ENCODE measurements at regions of chr1 and their contacts with region 1.

Region 1: DNA sequence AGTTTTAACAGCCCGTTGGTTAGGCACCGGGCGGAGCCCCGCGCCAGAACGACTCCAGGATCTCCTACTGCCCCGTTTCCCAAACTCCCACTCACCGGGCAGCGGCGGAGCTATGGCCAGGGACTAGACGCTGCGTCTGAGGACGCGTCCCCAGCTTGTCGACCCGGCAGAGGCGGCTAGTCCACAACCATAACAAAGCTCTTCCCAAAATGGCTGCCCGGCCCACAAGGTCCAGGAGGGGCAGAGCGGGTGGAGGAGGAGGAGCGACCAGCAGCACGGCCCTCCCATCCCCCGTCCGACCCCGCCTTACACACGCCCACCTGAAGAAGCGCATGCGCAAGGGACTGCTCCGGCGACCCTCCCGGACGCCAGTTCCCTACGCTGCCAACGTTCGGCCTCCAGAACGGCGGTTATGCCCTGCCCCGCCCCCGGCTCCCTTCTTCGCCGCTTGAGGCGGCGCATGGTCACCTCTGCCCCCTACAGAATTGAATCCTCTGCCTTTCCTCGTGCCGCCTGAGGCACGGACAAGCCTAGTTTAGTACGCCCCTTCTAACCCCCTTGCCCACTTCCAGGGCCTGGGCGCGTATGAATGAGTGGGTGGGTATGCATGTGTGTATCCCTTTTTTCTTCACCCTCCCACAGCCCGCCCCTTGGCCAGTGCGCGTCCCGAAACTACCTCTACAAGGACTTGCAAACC is at the start of gene GPBP1L1:
- DNase-seq: peak; percentile 94 to 98 (median 97)
- ATAC-seq: peak; percentile 85
- H3K4me3 ChIP-seq: peak within 1 kb of the TSS; percentile 86
- H3K4me3 Mint-ChIP-seq: peak within 1 kb of the TSS; percentile 95 to 100 (median 99)
- H3K27ac ChIP-seq: peak within 1 kb of the TSS; percentile 94
- H3K27ac Mint-ChIP-seq: peak within 1 kb of the TSS; percentile 99 to 100 (median 100)
- H3K4me1 ChIP-seq: peaks cover 29 to 35% of the 10 kb centered on the region in 2 donors
- H3K4me1 Mint-ChIP-seq: peaks cover 21 to 66% (median 50%) of the 10 kb centered on the region in 7 donors
- H3K27me3 ChIP-seq: no peaks in the 10 kb centered on the region
- H3K27me3 Mint-ChIP-seq: no peaks in the 10 kb centered on the region
- total RNA-seq, gene GPBP1L1: 110 to 180 (median 122) TPM

Region 2: DNA sequence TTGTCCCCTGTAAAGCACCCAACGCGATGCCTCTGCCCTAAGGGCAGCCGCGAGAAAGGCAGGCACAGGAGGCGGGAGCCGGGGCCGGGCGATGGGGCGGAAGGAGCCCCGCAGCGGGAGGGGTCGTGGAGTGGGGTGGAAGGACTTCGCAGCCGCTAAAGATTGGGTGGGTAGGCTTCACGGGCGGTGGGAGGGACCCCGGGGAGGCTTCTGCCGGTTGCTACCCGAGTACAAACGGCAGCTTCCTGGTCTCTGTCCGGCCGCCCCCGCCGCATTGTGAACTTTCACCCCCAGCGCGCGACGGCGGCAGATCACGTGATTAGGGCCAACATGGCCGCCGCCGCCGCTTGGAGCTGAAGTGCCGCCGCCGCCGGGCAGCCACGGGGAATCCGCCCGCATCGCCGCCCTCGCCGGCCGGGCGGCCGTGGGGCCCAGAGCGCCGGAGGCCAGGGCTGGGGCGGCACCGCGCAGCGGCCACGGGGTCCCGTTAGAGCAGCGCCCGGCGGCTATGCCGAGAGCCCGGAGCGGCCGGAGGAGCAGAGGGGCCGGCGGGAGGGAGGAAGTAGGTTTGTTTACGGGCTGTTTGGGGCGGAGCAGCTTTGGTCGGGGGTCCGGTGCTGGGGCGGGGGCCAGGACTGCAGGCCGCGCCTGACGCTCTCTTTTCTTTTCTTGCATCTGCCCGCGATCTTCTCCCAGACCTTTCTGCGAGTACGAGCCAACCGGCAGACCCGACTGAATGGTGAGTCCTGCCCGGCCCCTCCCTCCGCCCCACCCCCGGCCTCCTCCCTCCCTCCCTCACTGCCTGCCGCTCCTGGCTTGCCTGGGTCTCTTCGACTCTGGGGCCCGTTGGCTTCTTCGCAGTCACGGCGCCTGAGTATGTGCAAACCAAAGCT is 1054.6 kb before region 1 on chr1:
- CTCF ChIA-PET with region 1: no interaction called
- POLR2A ChIA-PET with region 1: interaction called, 5 read pairs
- intact Hi-C with region 1: loop called in 1 of 2 experiments (anchors 2 kb)
- DNase-seq: peak; percentile 80 to 92 (median 87)
- ATAC-seq: peak; percentile 87
- H3K4me3 ChIP-seq: peak overlapping the region; percentile 70
- H3K4me3 Mint-ChIP-seq: peak overlapping the region; percentile 69 to 95 (median 90)
- H3K27ac ChIP-seq: peak overlapping the region; percentile 85
- H3K27ac Mint-ChIP-seq: peak overlapping the region; percentile 46 to 99 (median 97)
- H3K4me1 ChIP-seq: peaks cover 8 to 13% of the 10 kb centered on the region in 2 donors
- H3K4me1 Mint-ChIP-seq: peaks cover 26 to 50% (median 39%) of the 10 kb centered on the region in 7 donors
- H3K27me3 ChIP-seq: no peaks in the 10 kb centered on the region
- H3K27me3 Mint-ChIP-seq: no peaks in the 10 kb centered on the region

Region 3: DNA sequence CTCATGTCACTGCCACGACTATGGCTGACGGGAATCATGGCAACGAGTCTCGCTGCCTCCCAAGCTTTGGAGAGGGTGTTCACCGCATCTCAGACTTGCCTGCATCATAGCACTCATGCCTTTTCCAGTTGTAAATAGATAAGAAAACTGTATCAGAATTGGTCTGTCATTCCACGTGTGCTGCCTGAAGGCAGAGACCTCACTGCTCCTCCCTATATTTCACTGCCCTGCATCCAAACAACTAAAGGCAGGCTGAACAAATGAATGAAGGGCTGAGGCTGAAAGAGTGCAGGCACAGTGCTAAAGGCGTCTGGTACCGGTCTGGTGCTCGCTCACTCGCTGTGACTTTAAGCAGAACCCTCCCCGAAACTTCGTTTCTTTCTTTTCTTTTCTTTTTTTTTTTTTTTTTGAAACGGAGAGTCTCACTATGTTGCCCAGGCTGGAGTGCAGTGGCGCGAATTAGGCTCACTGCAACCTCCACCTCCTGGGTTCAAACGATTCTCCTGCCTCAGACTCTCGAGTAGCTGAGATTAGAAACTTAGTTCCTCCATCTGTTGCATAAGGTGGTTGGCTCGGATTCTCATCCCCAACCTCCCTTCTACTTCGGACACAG is 700.6 kb before region 1 on chr1:
- CTCF ChIA-PET with region 1: no interaction called
- POLR2A ChIA-PET with region 1: interaction called, 3 read pairs
- intact Hi-C with region 1: loop called (anchors 5 kb)
- DNase-seq: no peak
- ATAC-seq: no peak
- H3K4me3 ChIP-seq: peak overlapping the region; percentile 77
- H3K4me3 Mint-ChIP-seq: peak overlapping the region; percentile 90 to 100 (median 98)
- H3K27ac ChIP-seq: peak overlapping the region; percentile 68
- H3K27ac Mint-ChIP-seq: peak overlapping the region; percentile 75 to 99 (median 92)
- H3K4me1 ChIP-seq: peaks cover 8 to 13% of the 10 kb centered on the region in 2 donors
- H3K4me1 Mint-ChIP-seq: peaks cover 7 to 39% (median 23%) of the 10 kb centered on the region in 7 donors
- H3K27me3 ChIP-seq: no peaks in the 10 kb centered on the region
- H3K27me3 Mint-ChIP-seq: no peaks in the 10 kb centered on the region

Region 4: DNA sequence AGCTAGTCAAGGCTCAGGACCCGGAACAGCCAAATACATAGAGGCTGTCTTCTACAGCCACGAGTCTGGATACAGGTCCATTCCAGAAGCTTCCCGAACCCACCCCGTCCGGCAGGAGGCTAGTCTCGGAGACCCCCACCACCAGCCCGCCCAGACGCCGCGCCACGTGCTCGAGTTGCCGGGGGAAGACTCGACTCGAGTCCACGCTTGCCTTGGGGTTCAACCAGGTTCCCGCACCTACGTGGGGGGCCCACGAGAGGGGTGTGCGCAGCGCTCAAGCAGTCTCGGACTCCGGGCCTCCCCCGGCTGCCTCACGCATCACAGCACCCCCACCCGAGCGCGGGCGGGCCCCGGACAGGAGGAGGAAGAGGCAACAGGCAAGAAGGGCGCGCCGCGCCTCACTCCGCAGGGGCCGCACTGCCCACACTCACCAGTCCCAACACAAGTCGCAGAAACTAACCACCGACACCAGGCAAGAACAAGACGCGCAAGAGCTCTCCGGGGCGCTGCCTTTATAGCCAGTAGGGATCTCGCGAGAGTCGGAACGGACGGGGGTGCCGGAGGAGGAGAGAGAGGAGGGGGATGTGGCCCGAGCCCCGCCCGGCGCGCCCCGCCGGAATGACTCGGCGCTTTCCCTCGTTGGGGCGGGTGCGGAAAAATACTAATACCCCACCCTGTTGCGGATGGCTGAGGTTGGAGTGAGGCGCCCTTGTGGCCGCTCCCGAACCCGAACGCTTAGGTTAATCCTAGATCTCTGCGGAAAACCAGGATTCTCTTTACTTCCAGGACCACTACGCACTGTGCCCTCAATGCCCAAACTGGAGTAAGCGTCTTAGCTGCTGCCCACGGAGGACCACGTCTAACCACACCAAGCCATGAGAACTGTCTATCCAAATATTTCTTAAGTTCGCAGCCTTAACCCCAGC is 164.8 kb before region 1 on chr1 and contains the start of gene PRDX1:
- CTCF ChIA-PET with region 1: no interaction called
- POLR2A ChIA-PET with region 1: interaction called, 7 read pairs
- intact Hi-C with region 1: loop called (anchors 1 to 2 kb)
- DNase-seq: peak; percentile 91 to 99 (median 93)
- ATAC-seq: peak; percentile 95
- H3K4me3 ChIP-seq: peak within 1 kb of the TSS; percentile 94
- H3K4me3 Mint-ChIP-seq: peak within 1 kb of the TSS; percentile 90 to 99 (median 94)
- H3K27ac ChIP-seq: peak within 1 kb of the TSS; percentile 87
- H3K27ac Mint-ChIP-seq: peak within 1 kb of the TSS; percentile 83 to 96 (median 91)
- H3K4me1 ChIP-seq: peaks cover 7 to 8% of the 10 kb centered on the region in 2 donors
- H3K4me1 Mint-ChIP-seq: peaks cover 14 to 56% (median 32%) of the 10 kb centered on the region in 7 donors
- H3K27me3 ChIP-seq: no peaks in the 10 kb centered on the region
- H3K27me3 Mint-ChIP-seq: peaks cover 0 to 12% (median 0%) of the 10 kb centered on the region in 5 donors
- total RNA-seq, gene PRDX1: 28.8 to 369 (median 96.3) TPM

Region 5: DNA sequence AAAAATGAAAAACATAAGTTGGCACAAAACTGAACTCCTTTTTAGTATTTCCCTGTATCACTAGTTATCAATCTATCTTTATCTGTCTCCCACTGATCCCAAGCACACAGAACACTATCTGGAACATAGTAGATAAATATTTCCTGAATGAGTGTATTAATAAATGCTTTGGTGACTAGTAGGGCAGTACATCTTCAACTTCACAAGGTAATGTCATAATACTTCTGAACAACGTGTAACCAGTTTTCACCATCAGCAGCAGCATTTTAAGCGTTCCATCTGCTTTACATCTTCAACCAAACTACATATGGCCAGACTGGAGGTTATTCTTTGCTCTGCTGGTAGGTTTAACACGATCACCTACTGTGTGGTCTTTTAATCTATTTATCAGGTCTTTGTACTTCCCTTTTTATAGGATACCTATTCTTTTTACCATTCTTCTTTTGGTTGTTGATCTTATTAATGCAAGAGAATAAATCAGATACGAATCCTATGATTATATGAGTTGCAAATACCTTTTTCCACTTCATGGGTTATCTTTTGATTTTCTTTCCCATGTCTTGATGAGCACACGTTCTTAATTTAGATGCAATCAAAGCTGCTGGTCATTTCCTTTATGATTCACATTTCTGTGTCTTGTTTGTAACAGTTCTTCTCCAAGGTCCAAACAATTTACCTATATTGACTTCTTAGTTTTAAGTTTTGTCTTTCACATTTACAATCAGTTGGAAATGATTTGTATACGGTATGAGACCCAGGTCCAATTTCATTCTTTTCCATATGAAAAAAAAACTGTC is 16.4 kb before region 1 on chr1:
- CTCF ChIA-PET with region 1: interaction called, 3 read pairs
- POLR2A ChIA-PET with region 1: interaction called, 18 read pairs
- intact Hi-C with region 1: no loop called
- DNase-seq: no peak
- ATAC-seq: no peak
- H3K4me3 ChIP-seq: no peak overlapping the region
- H3K4me3 Mint-ChIP-seq: peak overlapping the region in 2 of 10 donors; percentile 11 to 40
- H3K27ac ChIP-seq: no peak overlapping the region
- H3K27ac Mint-ChIP-seq: peak overlapping the region in 2 of 9 donors; percentile 13 to 48
- H3K4me1 ChIP-seq: peaks cover 7 to 11% of the 10 kb centered on the region in 2 donors
- H3K4me1 Mint-ChIP-seq: peaks cover 24 to 90% (median 75%) of the 10 kb centered on the region in 7 donors
- H3K27me3 ChIP-seq: no peaks in the 10 kb centered on the region
- H3K27me3 Mint-ChIP-seq: no peaks in the 10 kb centered on the region

Region 6: DNA sequence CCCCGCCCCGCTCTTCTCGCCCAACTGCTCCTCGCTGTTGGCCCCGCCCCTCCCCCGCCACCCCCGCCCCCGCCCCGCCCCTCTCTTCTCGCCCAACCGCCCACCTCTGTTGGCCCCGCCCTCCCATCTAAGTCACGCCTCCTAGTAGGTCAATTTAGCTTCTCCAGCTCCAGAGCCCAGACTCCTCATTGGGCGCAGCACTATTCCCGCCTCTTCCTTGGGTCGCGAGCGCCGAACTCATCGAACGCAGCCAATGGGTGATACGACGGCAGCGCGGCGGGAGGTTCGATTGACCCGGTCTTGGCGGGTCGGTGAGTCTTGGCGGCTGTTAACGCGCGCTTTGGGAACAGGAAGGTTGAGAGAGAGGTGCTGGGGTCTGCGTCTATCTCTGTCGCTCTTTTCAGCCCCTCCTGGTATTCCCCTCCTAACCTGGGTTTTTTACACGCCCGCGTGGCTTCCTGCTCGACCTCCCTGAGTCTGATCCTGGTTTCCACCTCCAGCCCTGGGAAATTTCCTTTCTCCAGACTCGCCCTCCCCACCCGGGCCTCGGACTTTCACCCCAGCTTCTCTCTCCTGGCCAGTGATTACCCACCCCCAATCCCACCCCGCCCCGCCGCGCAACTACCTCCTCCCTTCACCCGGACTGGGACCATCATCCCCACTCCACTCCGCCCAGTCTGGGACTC is 561.1 kb after region 1 on chr1 and contains the start of gene RAD54L:
- CTCF ChIA-PET with region 1: no interaction called
- POLR2A ChIA-PET with region 1: no interaction called
- intact Hi-C with region 1: loop called (anchors 1 to 2 kb)
- DNase-seq: peak; percentile 83 to 97 (median 95)
- ATAC-seq: peak; percentile 99
- H3K4me3 ChIP-seq: peak within 1 kb of the TSS; percentile 89
- H3K4me3 Mint-ChIP-seq: peak within 1 kb of the TSS; percentile 86 to 100 (median 94)
- H3K27ac ChIP-seq: peak within 1 kb of the TSS; percentile 66
- H3K27ac Mint-ChIP-seq: peak within 1 kb of the TSS; percentile 62 to 96 (median 78)
- H3K4me1 ChIP-seq: peaks cover 4 to 8% of the 10 kb centered on the region in 2 donors
- H3K4me1 Mint-ChIP-seq: peaks cover 0 to 41% (median 17%) of the 10 kb centered on the region in 7 donors
- H3K27me3 ChIP-seq: no peaks in the 10 kb centered on the region
- H3K27me3 Mint-ChIP-seq: no peaks in the 10 kb centered on the region
- total RNA-seq, gene RAD54L: 0.94 to 31.9 (median 2.1) TPM

Region 7: GRCh38 chr1:46477153-46477929 is 790.9 kb after region 1 on chr1:
- CTCF ChIA-PET with region 1: no interaction called
- POLR2A ChIA-PET with region 1: no interaction called
- intact Hi-C with region 1: no loop called
- DNase-seq: peak; percentile 44 to 79 (median 60)
- ATAC-seq: peak; percentile 92
- H3K4me3 ChIP-seq: no peak overlapping the region
- H3K4me3 Mint-ChIP-seq: no peak overlapping the region
- H3K27ac ChIP-seq: no peak overlapping the region
- H3K27ac Mint-ChIP-seq: peak overlapping the region in 1 of 9 donors; percentile 55
- H3K4me1 ChIP-seq: no peaks in the 10 kb centered on the region
- H3K4me1 Mint-ChIP-seq: no peaks in the 10 kb centered on the region
- H3K27me3 ChIP-seq: no peaks in the 10 kb centered on the region
- H3K27me3 Mint-ChIP-seq: peaks cover 13 to 60% (median 28%) of the 10 kb centered on the region in 5 donors

Measured in naive thymus-derived CD4-positive, alpha-beta T cell (primary cell).